ENCODE measurements at regions of chr15 and their contacts with region 1.

Region 1: DNA sequence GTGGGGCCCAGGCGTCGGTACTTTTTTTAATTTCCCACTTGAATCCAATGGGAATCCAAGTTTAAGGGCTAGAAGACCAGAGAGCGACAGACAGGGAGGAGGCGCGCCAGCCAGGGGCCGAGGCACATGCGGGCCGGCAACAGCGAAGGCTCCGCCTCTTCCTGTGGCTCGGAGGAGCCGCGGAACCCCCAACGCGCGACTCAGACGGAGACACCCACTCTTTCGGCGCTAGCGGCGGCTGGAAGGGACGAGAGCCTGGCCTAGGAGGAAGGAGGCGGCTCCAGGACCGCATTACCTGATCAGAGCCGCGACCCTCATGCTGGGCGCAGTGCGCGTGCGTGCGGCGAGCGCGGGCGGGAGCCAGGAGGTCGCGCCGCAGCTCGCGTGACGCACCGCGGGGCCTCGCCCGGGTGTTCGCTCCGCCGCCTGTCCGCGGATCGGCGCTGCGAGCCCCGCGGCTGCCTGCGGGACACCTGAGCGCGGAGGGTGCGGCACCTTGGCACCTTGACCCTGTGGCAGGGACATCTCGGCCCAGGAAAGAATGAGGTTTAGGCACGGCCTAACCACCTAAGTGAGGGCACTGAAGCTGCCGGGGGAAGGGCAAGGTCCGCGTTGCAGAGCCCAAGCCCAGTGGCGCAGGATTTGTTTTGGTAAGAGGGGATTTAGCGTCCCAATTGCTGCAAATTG is at the start of gene DPH6:
- DNase-seq: peak; percentile 84
- ATAC-seq: peak; percentile 82
- H3K4me3 Mint-ChIP-seq: peak within 1 kb of the TSS; percentile 93
- H3K27ac Mint-ChIP-seq: peak within 1 kb of the TSS; percentile 92
- H3K4me1 Mint-ChIP-seq: peaks cover 30% of the 10 kb centered on the region
- H3K27me3 Mint-ChIP-seq: no peaks in the 10 kb centered on the region
- CTCF ChIP-seq: no peak
- total RNA-seq, gene DPH6: 18.8 and 20.8 TPM in 2 replicates

Region 2: GRCh38 chr15:34223904-34224596 is 1321.9 kb before region 1 on chr15:
- CTCF ChIA-PET with region 1: no interaction called
- POLR2A ChIA-PET with region 1: no interaction called
- intact Hi-C with region 1: loop called (anchors 5 kb)
- DNase-seq: no peak
- ATAC-seq: peak; percentile 7
- H3K4me3 Mint-ChIP-seq: peak overlapping the region; percentile 92
- H3K27ac Mint-ChIP-seq: peak overlapping the region; percentile 96
- H3K4me1 Mint-ChIP-seq: peaks cover 27% of the 10 kb centered on the region
- H3K27me3 Mint-ChIP-seq: peaks cover 1% of the 10 kb centered on the region
- CTCF ChIP-seq: no peak

Region 3: DNA sequence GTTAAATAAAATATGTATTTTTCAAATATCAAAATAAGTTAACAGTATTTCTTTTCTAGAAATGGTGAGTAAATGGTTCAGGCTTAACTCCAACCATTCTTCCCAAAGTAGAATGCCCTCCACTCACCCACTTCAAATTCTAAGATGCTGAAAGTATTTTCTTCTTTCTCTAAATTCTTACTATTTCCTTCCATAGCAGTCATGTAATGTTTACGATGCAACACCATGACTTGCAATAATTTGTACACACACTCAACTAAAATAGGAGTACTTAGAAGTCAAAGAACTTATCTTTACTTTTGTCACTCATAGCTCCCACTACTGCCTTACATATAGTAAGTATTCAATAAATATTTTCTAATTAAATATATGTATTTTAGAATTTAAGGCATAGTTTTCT is 641.4 kb before region 1 on chr15:
- CTCF ChIA-PET with region 1: no interaction called
- POLR2A ChIA-PET with region 1: no interaction called
- intact Hi-C with region 1: no loop called
- DNase-seq: no peak
- ATAC-seq: no peak
- H3K4me3 Mint-ChIP-seq: no peak overlapping the region
- H3K27ac Mint-ChIP-seq: no peak overlapping the region
- H3K4me1 Mint-ChIP-seq: no peaks in the 10 kb centered on the region
- H3K27me3 Mint-ChIP-seq: no peaks in the 10 kb centered on the region
- CTCF ChIP-seq: no peak

Region 4: GRCh38 chr15:34987985-34988873 is 557.7 kb before region 1 on chr15 and contains the start of gene ZNF770:
- CTCF ChIA-PET with region 1: no interaction called
- POLR2A ChIA-PET with region 1: interaction called, 9 read pairs
- intact Hi-C with region 1: loop called (anchors 1 kb)
- DNase-seq: peak; percentile 92
- ATAC-seq: peak; percentile 85
- H3K4me3 Mint-ChIP-seq: peak within 1 kb of the TSS; percentile 98
- H3K27ac Mint-ChIP-seq: peak within 1 kb of the TSS; percentile 98
- H3K4me1 Mint-ChIP-seq: peaks cover 37% of the 10 kb centered on the region
- H3K27me3 Mint-ChIP-seq: no peaks in the 10 kb centered on the region
- CTCF ChIP-seq: no peak
- total RNA-seq, gene ZNF770: 46.8 TPM in 2 replicates

Region 5: DNA sequence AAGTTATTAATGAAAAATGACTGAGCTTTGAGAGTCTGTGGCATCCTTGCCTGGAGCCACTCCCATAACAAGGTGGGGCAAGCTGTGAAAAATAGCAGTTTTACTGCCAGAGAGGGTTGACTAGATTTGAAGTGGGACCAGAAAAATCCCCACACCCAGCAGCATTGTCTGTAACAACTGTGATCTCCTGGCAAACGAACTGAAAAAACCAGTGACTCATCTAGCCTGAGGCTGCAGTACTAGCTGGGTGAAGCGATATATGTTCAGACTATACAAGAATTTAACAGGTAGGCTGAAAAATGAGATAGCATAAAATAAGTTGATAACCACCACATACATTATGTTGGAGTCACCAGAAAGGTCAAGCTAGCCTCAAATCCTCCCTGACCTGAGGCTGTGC is 64.0 kb before region 1 on chr15:
- CTCF ChIA-PET with region 1: no interaction called
- POLR2A ChIA-PET with region 1: no interaction called
- intact Hi-C with region 1: no loop called
- DNase-seq: no peak
- ATAC-seq: no peak
- H3K4me3 Mint-ChIP-seq: no peak overlapping the region
- H3K27ac Mint-ChIP-seq: no peak overlapping the region
- H3K4me1 Mint-ChIP-seq: no peaks in the 10 kb centered on the region
- H3K27me3 Mint-ChIP-seq: no peaks in the 10 kb centered on the region
- CTCF ChIP-seq: no peak

Region 6: DNA sequence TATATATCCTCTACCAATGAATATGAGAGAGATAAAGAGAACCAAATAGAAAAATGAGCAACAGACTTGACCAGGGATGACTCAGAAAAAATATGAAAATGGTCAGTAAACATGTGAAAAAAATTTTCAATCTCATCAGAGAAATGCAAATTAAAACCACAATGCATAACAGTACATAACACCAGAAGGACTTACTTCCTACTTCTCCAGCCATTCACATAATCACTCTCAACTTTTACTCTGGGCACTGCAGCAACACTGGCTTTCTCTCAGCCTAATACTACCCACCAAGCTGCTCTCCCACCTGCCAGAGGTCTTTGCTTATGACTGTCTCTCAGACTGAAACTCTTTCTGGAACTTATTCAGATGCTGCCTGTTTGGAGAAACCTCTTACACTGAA is 49.4 kb before region 1 on chr15:
- CTCF ChIA-PET with region 1: no interaction called
- POLR2A ChIA-PET with region 1: no interaction called
- intact Hi-C with region 1: loop called (anchors 1 kb)
- DNase-seq: no peak
- ATAC-seq: peak; percentile 94
- H3K4me3 Mint-ChIP-seq: no peak overlapping the region
- H3K27ac Mint-ChIP-seq: no peak overlapping the region
- H3K4me1 Mint-ChIP-seq: peaks cover 7% of the 10 kb centered on the region
- H3K27me3 Mint-ChIP-seq: no peaks in the 10 kb centered on the region
- CTCF ChIP-seq: no peak

Region 7: GRCh38 chr15:36579792-36580431 is 1033.9 kb after region 1 on chr15:
- CTCF ChIA-PET with region 1: no interaction called
- POLR2A ChIA-PET with region 1: interaction called, 6 read pairs
- intact Hi-C with region 1: loop called (anchors 1 kb)
- DNase-seq: no peak
- ATAC-seq: peak; percentile 19
- H3K4me3 Mint-ChIP-seq: peak overlapping the region; percentile 93
- H3K27ac Mint-ChIP-seq: peak overlapping the region; percentile 96
- H3K4me1 Mint-ChIP-seq: peaks cover 22% of the 10 kb centered on the region
- H3K27me3 Mint-ChIP-seq: peaks cover 2% of the 10 kb centered on the region
- CTCF ChIP-seq: no peak

Region 8: DNA sequence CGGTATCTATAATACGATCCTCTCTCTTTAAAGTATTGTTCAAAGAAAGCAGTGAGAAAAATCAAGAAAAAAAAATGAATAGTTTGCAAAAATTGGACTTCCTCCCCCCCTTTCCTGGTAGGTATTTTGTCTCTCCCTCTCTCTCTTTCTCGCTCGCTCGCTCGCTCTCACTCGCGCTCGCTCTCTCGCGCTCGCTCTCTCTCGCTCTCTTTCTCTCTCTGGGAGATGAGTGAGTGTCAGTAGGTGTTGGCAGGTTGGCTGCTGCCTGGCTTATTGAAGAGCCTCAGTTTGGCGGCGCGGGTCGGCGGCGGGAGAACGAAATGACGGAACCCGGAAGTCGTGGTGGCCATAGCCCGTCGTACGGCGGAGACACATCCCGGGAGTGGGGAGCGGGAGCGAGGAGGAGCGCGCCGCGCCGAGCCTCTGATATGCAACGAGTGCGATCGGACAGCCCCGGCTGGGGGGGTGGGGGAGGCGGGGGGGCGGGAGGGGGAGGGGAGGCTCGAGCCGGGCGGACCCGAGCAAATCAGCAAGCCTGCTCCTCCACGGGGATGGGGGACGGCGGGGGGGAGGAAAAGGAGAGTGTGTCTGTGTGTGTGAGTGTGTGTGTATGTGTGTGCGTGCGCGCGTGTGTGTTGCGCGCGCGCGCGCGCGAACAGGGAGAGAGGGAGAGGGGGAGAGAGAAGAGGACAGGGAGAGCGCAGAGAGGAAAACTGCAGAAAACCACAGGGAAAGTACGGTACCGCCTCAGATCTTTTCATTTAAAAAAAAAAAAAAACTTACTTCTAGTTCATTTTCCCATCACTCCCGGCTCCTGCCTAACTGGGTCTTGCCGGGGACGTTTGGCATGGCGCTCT is 1554.4 kb after region 1 on chr15 and contains the start of gene MEIS2:
- CTCF ChIA-PET with region 1: no interaction called
- POLR2A ChIA-PET with region 1: no interaction called
- intact Hi-C with region 1: loop called (anchors 5 kb)
- DNase-seq: no peak
- ATAC-seq: peak; percentile 31
- H3K4me3 Mint-ChIP-seq: peak within 1 kb of the TSS; percentile 94
- H3K27ac Mint-ChIP-seq: peak within 1 kb of the TSS; percentile 39
- H3K4me1 Mint-ChIP-seq: peaks cover 43% of the 10 kb centered on the region
- H3K27me3 Mint-ChIP-seq: peaks cover 71% of the 10 kb centered on the region
- CTCF ChIP-seq: no peak
- total RNA-seq, gene MEIS2: 0.24 TPM in 1 of 2 replicates, not detected in the other